ENCODE measurements at regions of chr5 and their contacts with region 1.

Region 1: DNA sequence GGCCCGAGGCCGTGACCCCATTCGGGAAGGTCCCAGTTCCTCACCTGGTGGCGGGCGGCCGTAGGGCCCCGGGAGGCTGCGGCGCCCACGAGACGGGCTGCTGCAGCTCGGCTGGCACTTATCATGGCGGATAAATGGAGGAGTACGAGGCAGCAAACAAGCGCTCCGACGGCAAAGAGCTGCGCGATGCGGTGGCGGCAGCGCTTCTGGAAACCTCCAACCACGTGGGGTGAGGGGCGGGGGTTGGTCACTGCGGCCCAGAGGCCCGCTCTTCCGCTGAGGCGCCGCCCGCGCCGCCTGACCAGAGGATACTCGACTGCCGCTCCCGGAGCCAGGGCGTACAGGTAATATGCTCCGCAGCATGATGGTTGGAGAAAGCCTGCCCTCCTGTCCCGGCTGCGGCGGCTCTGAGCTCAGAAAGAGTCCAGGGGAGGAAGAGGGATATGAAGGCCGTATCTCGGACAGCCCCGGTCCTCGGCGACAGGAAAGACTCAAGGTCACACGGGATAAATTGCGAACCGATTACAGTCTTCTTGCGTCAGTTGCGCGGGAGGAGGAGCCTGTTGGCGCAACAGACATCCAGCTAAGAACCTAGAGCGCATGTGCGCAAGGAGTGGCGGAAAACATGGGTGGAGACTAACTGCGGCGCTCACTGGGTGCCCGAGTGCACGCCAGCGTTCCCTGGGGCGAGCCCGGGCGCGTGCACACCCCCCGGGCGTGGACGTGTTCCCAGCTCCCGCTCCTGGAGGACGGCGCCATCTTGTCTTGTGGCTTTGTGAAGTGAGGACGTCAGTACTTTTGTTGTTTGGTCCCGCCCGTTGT is at the start of gene HSPA9:
- DNase-seq: peak; percentile 100
- H3K4me3 Mint-ChIP-seq: peak within 1 kb of the TSS; percentile 95
- H3K27ac Mint-ChIP-seq: peak within 1 kb of the TSS; percentile 100
- H3K4me1 Mint-ChIP-seq: peaks cover 23% of the 10 kb centered on the region
- H3K27me3 Mint-ChIP-seq: no peaks in the 10 kb centered on the region
- CTCF ChIP-seq: no peak
- total RNA-seq, gene HSPA9: 1,057 and 1,102 TPM in 2 replicates

Region 2: DNA sequence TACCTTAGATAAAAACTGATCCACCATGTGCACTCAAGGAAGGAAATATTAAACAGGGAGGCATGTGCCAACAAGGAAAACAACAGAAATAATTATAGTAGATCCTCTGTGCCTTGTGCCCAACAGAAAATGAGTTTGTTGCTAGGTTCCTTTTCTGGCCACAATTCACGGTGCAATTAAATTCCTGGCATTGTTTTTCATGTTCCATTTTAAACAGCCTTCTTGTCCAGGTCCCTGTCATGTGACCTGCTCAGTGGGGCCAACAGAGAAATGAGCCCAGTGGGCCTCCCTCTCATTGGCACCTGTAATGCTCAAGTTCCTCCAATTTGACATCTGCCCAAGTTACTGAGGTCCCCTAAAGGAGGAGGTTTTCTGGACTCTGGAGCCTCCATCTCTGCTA is 1132.7 kb before region 1 on chr5:
- CTCF ChIA-PET with region 1: no interaction called
- POLR2A ChIA-PET with region 1: no interaction called
- intact Hi-C with region 1: no loop called
- DNase-seq: no peak
- H3K4me3 Mint-ChIP-seq: no peak overlapping the region
- H3K27ac Mint-ChIP-seq: no peak overlapping the region
- H3K4me1 Mint-ChIP-seq: no peaks in the 10 kb centered on the region
- H3K27me3 Mint-ChIP-seq: no peaks in the 10 kb centered on the region
- CTCF ChIP-seq: no peak

Region 3: GRCh38 chr5:138148811-138149210 is 426.6 kb before region 1 on chr5:
- CTCF ChIA-PET with region 1: no interaction called
- POLR2A ChIA-PET with region 1: no interaction called
- intact Hi-C with region 1: no loop called
- DNase-seq: peak; percentile 94
- H3K4me3 Mint-ChIP-seq: no peak overlapping the region
- H3K27ac Mint-ChIP-seq: no peak overlapping the region
- H3K4me1 Mint-ChIP-seq: no peaks in the 10 kb centered on the region
- H3K27me3 Mint-ChIP-seq: no peaks in the 10 kb centered on the region
- CTCF ChIP-seq: no peak

Region 4: DNA sequence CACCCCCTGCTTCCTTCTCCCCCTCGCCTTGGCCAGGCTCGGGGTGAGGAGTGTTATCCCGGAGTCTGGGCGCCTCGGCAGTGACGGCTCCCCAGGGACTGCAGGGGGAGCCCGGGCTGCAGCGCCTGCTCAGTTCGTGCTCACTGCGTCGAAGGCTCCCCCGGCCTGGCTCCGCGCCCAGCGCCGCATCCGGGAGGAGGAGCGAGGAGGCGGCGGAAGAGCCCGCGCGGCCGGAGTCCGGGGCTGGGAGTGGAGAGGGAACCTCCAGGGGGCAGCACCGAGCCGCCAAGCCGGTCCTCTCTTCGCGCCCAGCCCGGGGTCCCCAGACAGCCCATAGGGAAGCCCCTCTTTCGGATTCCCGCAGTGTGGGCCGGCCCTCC is 111.4 kb before region 1 on chr5:
- CTCF ChIA-PET with region 1: no interaction called
- POLR2A ChIA-PET with region 1: interaction called, 48 read pairs
- intact Hi-C with region 1: no loop called
- DNase-seq: peak; percentile 98
- H3K4me3 Mint-ChIP-seq: peak overlapping the region; percentile 78
- H3K27ac Mint-ChIP-seq: peak overlapping the region; percentile 93
- H3K4me1 Mint-ChIP-seq: peaks cover 45% of the 10 kb centered on the region
- H3K27me3 Mint-ChIP-seq: peaks cover 20% of the 10 kb centered on the region
- CTCF ChIP-seq: peak; percentile 97

Region 5: DNA sequence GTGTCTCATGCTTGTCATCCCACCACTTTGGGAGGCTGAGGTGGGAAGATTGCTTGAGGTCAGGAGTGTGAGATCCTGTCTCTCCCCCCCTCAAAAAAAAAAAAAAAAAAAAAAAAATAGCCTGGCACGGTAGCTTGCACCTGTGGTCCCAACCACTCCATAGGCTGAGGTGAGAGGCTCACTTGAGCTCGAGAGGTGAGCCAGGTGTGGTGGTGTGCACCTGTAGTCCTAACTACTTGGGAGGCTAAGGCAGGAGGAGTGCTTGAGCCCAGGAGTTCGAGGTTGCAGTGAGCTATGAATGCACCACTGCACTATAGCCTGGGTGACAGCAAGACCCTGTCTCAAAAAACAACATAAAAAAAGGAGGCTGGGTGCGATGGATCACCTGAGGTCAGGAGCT is 22.7 kb before region 1 on chr5:
- CTCF ChIA-PET with region 1: interaction called, 8 read pairs
- POLR2A ChIA-PET with region 1: interaction called, 14 read pairs
- intact Hi-C with region 1: no loop called
- DNase-seq: no peak
- H3K4me3 Mint-ChIP-seq: no peak overlapping the region
- H3K27ac Mint-ChIP-seq: no peak overlapping the region
- H3K4me1 Mint-ChIP-seq: peaks cover 10% of the 10 kb centered on the region
- H3K27me3 Mint-ChIP-seq: no peaks in the 10 kb centered on the region
- CTCF ChIP-seq: no peak

Region 6: DNA sequence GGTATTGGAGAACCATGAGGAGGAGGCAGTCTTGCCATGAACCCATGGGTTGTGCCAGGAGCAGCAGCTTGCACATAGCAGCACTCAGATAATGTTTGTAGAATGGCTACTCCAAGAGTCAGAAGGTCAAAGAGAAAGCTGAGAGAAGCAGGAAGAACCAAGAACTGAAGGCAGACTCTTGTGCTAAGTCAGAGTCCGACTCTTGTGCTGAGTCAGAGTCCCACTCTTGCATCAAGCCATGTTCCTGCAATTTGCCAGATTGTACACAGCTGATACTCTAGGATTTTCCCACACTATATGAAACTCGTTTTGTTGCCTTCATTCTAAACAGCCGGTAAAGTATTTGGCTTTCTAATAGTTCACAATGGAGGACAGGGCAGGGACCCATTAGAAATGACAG is 26.0 kb after region 1 on chr5:
- CTCF ChIA-PET with region 1: interaction called, 14 read pairs
- POLR2A ChIA-PET with region 1: interaction called, 7 read pairs
- intact Hi-C with region 1: no loop called
- DNase-seq: peak; percentile 61
- H3K4me3 Mint-ChIP-seq: no peak overlapping the region
- H3K27ac Mint-ChIP-seq: no peak overlapping the region
- H3K4me1 Mint-ChIP-seq: peaks cover 11% of the 10 kb centered on the region
- H3K27me3 Mint-ChIP-seq: no peaks in the 10 kb centered on the region
- CTCF ChIP-seq: no peak

Region 7: DNA sequence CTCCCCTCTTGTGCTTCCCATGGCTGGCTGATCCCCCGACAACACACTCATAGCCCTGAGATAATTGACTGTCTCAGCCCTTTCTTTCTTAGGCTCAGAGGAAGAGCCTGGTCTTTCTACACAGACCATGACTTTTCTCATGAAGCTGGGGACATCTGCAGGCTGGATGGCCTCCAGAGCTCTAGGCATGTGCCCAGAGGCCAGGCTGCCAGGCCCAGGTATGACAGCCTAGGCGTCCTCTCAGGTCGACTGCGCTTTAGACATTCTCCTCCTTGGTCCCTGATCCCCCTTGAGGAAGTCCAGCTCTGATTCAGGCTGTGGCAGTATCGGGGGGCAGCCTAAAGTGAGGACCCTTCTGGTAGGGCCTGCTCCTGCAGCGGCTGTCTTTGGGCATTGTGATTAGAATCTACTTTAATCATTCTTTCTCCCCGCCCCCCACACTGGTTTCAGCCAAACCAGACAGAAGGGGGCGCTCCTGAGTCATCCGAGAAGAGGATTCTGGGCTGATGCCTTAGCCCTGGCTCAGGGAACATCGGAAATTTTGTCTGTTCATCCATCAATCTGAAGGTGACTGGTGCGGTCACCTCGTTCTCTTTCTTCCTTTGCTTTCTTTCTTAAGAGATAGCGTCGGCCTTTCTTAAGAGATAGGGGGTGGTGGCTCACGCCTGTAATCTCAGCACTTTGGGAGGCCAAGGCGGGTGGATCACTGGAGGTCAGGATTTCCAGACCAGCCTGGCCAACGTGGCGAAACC is 66.3 kb after region 1 on chr5:
- CTCF ChIA-PET with region 1: interaction called, 10 read pairs
- POLR2A ChIA-PET with region 1: interaction called, 5 read pairs
- intact Hi-C with region 1: loop called (anchors 1 kb)
- DNase-seq: peak; percentile 91
- H3K4me3 Mint-ChIP-seq: no peak overlapping the region
- H3K27ac Mint-ChIP-seq: no peak overlapping the region
- H3K4me1 Mint-ChIP-seq: peaks cover 4% of the 10 kb centered on the region
- H3K27me3 Mint-ChIP-seq: no peaks in the 10 kb centered on the region
- CTCF ChIP-seq: peak; percentile 97

Region 8: DNA sequence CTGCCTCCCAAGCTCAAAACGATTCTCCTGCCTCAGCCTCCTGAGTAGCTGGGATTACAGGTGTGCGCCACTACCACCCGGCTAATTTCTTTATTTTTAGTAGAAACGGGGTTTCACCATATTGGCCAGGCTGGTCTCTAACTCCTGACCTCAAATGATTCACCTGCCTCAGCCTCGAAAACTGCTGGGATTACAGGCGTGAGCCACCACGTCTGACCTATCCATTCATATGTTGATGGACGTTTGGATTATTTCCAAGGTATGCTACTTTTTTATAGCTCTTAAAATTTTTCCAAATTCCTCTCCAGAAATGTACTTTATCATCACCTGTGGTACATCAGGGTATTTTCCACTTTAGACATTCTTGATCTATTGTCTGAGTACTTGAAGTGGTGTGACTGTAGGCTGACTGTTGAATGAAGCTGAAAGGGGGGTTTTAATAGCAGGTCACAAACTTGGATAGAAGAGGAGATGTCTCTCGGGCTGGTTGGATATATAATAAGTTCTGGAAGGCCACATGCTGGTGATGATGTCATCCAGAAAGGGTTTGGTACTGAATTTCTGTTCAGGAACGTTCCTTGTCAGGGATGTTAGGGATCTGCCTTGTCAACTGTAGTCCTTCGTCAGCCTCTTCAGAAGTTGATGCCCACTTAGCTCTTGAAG is 185.2 kb after region 1 on chr5:
- CTCF ChIA-PET with region 1: interaction called, 14 read pairs
- POLR2A ChIA-PET with region 1: interaction called, 58 read pairs
- intact Hi-C with region 1: no loop called
- DNase-seq: peak; percentile 37
- H3K4me3 Mint-ChIP-seq: no peak overlapping the region
- H3K27ac Mint-ChIP-seq: peak overlapping the region; percentile 86
- H3K4me1 Mint-ChIP-seq: peaks cover 60% of the 10 kb centered on the region
- H3K27me3 Mint-ChIP-seq: no peaks in the 10 kb centered on the region
- CTCF ChIP-seq: no peak

Region 9: GRCh38 chr5:139273572-139274289 is 698.3 kb after region 1 on chr5:
- CTCF ChIA-PET with region 1: interaction called, 7 read pairs
- POLR2A ChIA-PET with region 1: interaction called, 45 read pairs
- intact Hi-C with region 1: no loop called
- DNase-seq: peak; percentile 95
- H3K4me3 Mint-ChIP-seq: peak overlapping the region; percentile 74
- H3K27ac Mint-ChIP-seq: peak overlapping the region; percentile 65
- H3K4me1 Mint-ChIP-seq: peaks cover 49% of the 10 kb centered on the region
- H3K27me3 Mint-ChIP-seq: no peaks in the 10 kb centered on the region
- CTCF ChIP-seq: peak; percentile 10

Measured in MCF 10A (cell line).